Esophagus muscularis mucosa (tissue), 4 donors: ENCODE measurements at regions of chr14 and their contacts with region 1.

Region 1: GRCh38 chr14:91996948-91997371 is 42.9 kb downstream of the TRIP11 start:
- DNase-seq: no peak
- H3K4me3 ChIP-seq: no peak overlapping the region
- H3K27ac ChIP-seq: no peak overlapping the region
- H3K4me1 ChIP-seq: peaks cover 5 to 21% (median 16%) of the 10 kb centered on the region in 4 donors
- H3K27me3 ChIP-seq: no peaks in the 10 kb centered on the region
- CTCF ChIP-seq: peak; percentile 62 to 66 (median 64)
- EP300 ChIP-seq: no peak
- POLR2A ChIP-seq: no peak

Region 2: GRCh38 chr14:91649930-91650329 is 347.0 kb before region 1 on chr14:
- intact Hi-C with region 1: loop called (anchors 5 kb)
- DNase-seq: no peak
- H3K4me3 ChIP-seq: no peak overlapping the region
- H3K27ac ChIP-seq: no peak overlapping the region
- H3K4me1 ChIP-seq: peaks cover 0 to 7% (median 5%) of the 10 kb centered on the region in 4 donors
- H3K27me3 ChIP-seq: no peaks in the 10 kb centered on the region
- CTCF ChIP-seq: peak; percentile 66 to 75 (median 67)
- EP300 ChIP-seq: no peak
- POLR2A ChIP-seq: no peak

Region 3: DNA sequence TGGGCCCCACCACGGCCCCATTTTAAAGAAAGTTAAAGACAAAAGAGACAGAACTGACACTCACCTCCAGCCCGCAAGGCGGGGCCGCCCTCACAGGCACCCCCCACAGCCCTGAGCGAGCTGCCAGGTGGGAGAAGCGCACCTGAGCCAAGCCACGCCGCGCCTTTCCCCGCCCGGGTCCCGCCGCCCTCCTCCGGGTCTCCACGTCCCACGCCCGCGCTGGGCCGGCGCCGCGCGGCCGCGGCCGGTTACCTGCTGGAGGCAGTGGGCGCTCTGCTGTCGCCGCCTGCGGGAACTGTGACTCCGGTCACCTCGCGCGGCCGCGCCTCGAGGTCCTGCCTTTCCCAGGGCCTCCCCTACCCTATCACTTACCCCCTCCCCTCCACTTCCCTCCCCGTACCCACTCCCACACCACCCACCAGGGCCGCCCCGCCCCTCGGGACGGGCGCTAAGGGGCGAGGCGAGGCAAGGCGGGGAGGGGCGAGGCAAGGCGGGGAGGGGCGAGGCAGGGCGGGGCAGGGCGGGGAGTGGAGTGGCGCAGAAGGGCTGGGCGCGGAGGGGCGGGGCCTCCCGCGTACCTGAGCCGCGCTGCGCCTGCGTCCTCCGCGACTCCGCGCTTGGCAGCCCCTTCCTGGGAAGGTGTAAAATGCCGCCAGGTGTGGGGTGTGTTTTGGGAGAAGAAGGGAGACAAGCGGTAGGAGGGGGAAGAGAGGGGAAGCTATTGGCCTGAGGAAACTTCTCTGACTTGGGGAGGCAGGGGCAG is 160.7 kb before region 1 on chr14:
- intact Hi-C with region 1: loop called (anchors 10 kb)
- DNase-seq: no peak
- H3K4me3 ChIP-seq: peak overlapping the region; percentile 58 to 85 (median 62)
- H3K27ac ChIP-seq: peak overlapping the region; percentile 77 to 83 (median 80)
- H3K4me1 ChIP-seq: peaks cover 0 to 18% (median 16%) of the 10 kb centered on the region in 4 donors
- H3K27me3 ChIP-seq: peaks cover 0 to 44% (median 17%) of the 10 kb centered on the region in 4 donors
- CTCF ChIP-seq: no peak
- EP300 ChIP-seq: no peak
- POLR2A ChIP-seq: no peak

Region 4: GRCh38 chr14:91925001-91925726 is 71.8 kb before region 1 on chr14:
- intact Hi-C with region 1: no loop called
- DNase-seq: no peak
- H3K4me3 ChIP-seq: no peak overlapping the region
- H3K27ac ChIP-seq: peak overlapping the region in 3 of 4 donors; percentile 0 to 45 (median 34)
- H3K4me1 ChIP-seq: peaks cover 4 to 35% (median 26%) of the 10 kb centered on the region in 4 donors
- H3K27me3 ChIP-seq: no peaks in the 10 kb centered on the region
- CTCF ChIP-seq: no peak
- EP300 ChIP-seq: no peak
- POLR2A ChIP-seq: no peak

Region 5: DNA sequence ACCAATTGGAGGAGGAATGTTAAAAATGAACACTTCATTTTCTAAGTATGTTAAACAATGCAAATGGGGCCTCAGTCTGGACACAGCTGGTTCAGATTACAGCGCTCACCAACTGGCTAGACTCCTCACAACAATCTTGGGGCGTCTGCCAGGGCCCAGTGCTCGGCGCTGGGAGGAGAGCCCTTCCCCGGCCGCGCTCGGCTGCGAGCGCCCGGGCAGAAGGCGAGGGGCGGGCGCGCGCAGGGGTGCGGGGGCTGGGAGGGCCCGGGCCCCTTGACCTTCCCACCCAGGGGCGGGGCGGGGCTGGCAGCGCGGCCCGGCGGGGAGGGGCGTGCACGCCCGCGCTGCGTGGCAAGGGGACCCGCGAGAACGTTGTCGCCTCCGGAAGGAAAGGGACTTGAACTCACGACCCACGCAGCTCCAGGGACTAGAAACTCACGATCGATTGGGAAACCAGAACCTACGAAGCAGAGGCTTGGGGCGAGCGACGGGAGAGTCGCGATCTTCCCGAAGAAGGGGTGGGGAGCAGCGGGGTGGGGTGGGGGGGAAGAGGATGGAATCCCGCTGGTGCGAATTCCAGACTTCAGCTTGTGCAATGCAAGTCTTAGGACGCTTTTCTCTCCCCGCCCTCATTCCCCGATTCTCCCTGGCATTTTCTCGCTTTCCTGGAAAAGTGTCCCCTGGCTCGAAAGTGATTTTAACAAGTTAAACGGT is 49.3 kb before region 1 on chr14 and contains the start of gene FBLN5:
- intact Hi-C with region 1: loop called (anchors 10 kb)
- DNase-seq: no peak
- H3K4me3 ChIP-seq: peak within 1 kb of the TSS; percentile 56 to 79 (median 62)
- H3K27ac ChIP-seq: peak within 1 kb of the TSS; percentile 72 to 81 (median 76)
- H3K4me1 ChIP-seq: peaks cover 5 to 32% (median 30%) of the 10 kb centered on the region in 4 donors
- H3K27me3 ChIP-seq: peaks cover 0 to 58% (median 0%) of the 10 kb centered on the region in 4 donors
- CTCF ChIP-seq: no peak
- EP300 ChIP-seq: no peak
- POLR2A ChIP-seq: no peak
- total RNA-seq, gene FBLN5: 79.7 to 161 (median 116) TPM